Gastrocnemius medialis (tissue), 4 donors: ENCODE measurements at regions of chr1 and their contacts with region 1.

Region 1: DNA sequence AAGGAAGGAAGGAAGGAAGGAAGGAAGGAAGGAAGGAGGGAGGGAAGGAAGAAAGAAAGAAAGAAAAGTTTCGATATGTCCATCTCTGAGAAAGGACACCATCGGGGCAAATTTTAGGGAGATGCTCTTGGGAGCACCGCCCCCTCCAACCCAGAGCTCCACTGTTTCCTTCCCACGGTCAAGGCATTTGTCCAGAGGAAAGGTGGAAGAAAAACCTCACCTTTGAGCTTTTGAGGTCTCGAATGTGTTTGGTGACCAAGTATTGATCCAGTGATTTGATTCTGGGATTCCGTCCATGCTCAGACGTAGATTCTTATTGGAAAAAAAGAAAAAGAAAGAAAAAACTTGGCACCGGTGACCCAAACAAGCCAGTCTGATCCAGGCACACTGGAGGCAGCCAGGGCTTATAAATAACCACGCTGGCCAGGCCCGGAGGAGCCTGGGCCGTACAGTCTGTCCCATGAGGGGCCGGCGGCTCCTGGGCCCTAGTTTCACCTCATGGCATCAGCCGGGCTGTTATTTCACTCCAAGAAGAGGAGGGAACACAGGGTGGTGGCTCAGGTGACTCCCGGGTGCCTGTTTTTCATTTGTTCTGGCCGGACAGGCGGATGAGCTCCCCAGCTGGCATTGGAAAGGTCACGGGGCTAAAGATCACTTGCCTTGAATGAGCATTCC is 36.1 kb upstream of the SLC25A33 start:
- DNase-seq: peak; percentile 96 to 98
- ATAC-seq: peak; percentile 89 to 90
- H3K4me3 ChIP-seq: peak overlapping the region; percentile 52 to 60 (median 58)
- H3K27ac ChIP-seq: peak overlapping the region; percentile 90 to 98 (median 94)
- H3K4me1 ChIP-seq: peaks cover 18 to 19% of the 10 kb centered on the region in 2 donors
- H3K27me3 ChIP-seq: no peaks in the 10 kb centered on the region
- CTCF ChIP-seq: peak in 1 of 5 experiments; percentile 16
- POLR2A ChIP-seq: peak; percentile 80 to 89

Region 2: DNA sequence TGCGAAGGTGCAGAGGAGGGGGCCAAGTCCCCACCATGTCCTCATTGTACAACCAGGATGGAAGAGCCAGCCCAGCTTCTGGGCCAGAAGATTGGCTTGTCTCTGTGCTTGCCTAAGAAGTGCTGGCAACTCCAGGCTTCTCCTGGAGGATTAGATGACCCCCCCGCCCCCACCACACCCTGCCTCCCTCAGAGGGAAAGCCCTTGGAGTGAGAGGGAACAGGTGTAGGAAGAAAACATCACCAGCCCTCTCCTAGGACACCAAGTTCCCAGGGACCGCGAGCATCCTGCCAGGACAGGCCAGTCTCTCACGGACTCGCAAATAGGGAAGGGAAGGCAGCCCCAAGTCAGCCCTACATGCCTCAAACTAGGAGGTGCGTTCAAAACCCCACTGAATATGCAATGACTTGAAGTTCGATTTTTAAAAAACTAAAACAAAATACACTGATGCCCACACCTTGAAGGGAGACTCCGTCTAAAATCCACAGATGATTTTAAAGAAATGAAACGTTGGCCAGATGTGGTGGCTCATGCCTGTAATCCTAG is 15.4 kb after region 1 on chr1:
- in situ Hi-C with region 1: no loop called
- intact Hi-C with region 1: loop called (anchors 1 kb)
- DNase-seq: peak; percentile 96 to 99
- ATAC-seq: peak; percentile 81 to 83
- H3K4me3 ChIP-seq: peak overlapping the region in 1 of 4 donors; percentile 14
- H3K27ac ChIP-seq: peak overlapping the region; percentile 89 to 99 (median 94)
- H3K4me1 ChIP-seq: peaks cover 17 to 21% of the 10 kb centered on the region in 2 donors
- H3K27me3 ChIP-seq: no peaks in the 10 kb centered on the region
- CTCF ChIP-seq: no peak
- POLR2A ChIP-seq: peak; percentile 56 to 73

Region 3: DNA sequence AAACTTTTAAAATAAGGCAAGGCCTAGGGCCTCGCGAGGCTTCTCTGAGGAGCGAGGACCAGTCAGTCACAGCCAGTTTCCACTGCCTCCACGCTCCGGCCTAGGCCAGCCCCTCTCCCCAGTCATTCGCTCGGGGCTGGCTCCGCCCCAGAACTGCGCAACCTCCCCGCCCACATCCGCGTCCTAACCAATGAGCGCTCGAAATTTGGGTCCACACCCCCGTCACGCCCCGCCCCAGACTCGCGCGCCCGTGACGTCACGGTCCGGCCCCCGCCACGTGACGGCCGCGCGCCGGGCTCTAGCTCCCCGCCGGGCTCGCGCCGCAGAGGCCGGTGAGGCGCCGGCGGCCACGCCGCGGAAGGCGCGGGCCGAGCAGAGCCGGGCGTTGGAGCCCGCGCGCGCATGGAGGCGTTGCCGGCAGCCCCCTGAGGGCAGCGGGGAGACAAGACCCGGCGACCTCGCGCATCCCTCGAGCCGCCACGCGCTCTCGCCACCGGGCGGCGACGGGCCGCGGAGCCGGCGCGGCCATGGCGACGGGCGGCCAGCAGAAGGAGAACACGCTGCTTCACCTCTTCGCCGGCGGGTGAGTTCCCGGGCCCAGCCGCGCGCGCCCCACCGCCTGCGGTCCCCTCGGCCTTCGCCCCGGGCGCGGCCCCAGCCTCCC is 36.2 kb after region 1 on chr1 and contains the start of gene SLC25A33:
- in situ Hi-C with region 1: no loop called
- intact Hi-C with region 1: loop called (anchors 1 kb)
- DNase-seq: peak; percentile 96 to 97
- ATAC-seq: peak; percentile 92 to 93
- H3K4me3 ChIP-seq: peak within 1 kb of the TSS; percentile 75 to 89 (median 76)
- H3K27ac ChIP-seq: peak within 1 kb of the TSS; percentile 91 to 98 (median 95)
- H3K4me1 ChIP-seq: peaks cover 26 to 28% of the 10 kb centered on the region in 2 donors
- H3K27me3 ChIP-seq: no peaks in the 10 kb centered on the region
- CTCF ChIP-seq: peak in 3 of 5 experiments; percentile 20 to 60 (median 31)
- POLR2A ChIP-seq: peak; percentile 100
- total RNA-seq, gene SLC25A33: 40.3 to 88.6 (median 49.1) TPM

Region 4: GRCh38 chr1:9555942-9556341 is 52.8 kb after region 1 on chr1:
- in situ Hi-C with region 1: loop called in 1 of 4 experiments (anchors 5 kb)
- intact Hi-C with region 1: loop called (anchors 1 kb)
- DNase-seq: peak; percentile 84 to 92
- ATAC-seq: peak; percentile 87 to 88
- H3K4me3 ChIP-seq: peak overlapping the region; percentile 25 to 43 (median 38)
- H3K27ac ChIP-seq: peak overlapping the region; percentile 94 to 100 (median 96)
- H3K4me1 ChIP-seq: peaks cover 67 to 78% of the 10 kb centered on the region in 2 donors
- H3K27me3 ChIP-seq: no peaks in the 10 kb centered on the region
- CTCF ChIP-seq: no peak
- POLR2A ChIP-seq: peak; percentile 60 to 76

Region 5: GRCh38 chr1:9561429-9561828 is 58.3 kb after region 1 on chr1:
- in situ Hi-C with region 1: loop called in 2 of 4 experiments (anchors 5 kb)
- intact Hi-C with region 1: no loop called
- DNase-seq: peak; percentile 53 to 57
- ATAC-seq: peak; percentile 85 to 93
- H3K4me3 ChIP-seq: no peak overlapping the region
- H3K27ac ChIP-seq: peak overlapping the region; percentile 94 to 100 (median 96)
- H3K4me1 ChIP-seq: peaks cover 58 to 61% of the 10 kb centered on the region in 2 donors
- H3K27me3 ChIP-seq: no peaks in the 10 kb centered on the region
- CTCF ChIP-seq: no peak
- POLR2A ChIP-seq: no peak

Region 6: DNA sequence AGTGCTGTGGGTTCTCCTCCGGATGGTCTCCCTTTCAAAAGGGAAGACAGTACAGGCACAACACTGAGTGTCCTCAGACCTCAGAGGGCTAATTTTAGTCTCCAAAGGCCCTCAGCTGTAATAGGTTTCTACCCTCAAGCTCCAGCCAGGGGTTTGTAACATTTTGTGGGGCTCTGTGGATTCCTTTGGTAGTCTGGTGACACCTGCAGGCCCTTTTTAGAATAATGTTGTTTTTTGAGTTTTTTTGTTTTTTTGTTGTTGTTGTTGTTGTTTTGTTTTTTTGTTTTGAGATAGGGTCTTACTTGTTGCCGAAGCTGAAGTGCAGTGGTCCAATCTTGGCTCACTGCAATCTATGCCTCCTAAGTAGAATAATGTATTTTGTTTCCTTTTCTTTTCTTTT is 70.6 kb after region 1 on chr1:
- in situ Hi-C with region 1: loop called in 2 of 4 experiments (anchors 5 kb)
- intact Hi-C with region 1: no loop called
- DNase-seq: no peak
- ATAC-seq: peak in 1 of 2 donors; percentile 45
- H3K4me3 ChIP-seq: no peak overlapping the region
- H3K27ac ChIP-seq: peak overlapping the region in 2 of 4 donors; percentile 1 to 43
- H3K4me1 ChIP-seq: peaks cover 11 to 20% of the 10 kb centered on the region in 2 donors
- H3K27me3 ChIP-seq: no peaks in the 10 kb centered on the region
- CTCF ChIP-seq: peak in 4 of 5 experiments; percentile 13 to 42 (median 32)
- POLR2A ChIP-seq: no peak